ENCODE measurements at regions of chr10 and their contacts with region 1.

Region 1: GRCh38 chr10:119165171-119166110 is at the start of gene SFXN4:
- DNase-seq: peak in 1 of 2 experiments; percentile 65
- H3K4me3 ChIP-seq: peak within 1 kb of the TSS; percentile 84
- H3K27ac ChIP-seq: peak within 1 kb of the TSS; percentile 68
- H3K4me1 ChIP-seq: 0 out of 2 replicates have a peak, but pooled peaks cover 8% of the 10 kb centered on the region
- H3K27me3 ChIP-seq: no peaks in the 10 kb centered on the region
- CTCF ChIP-seq: no peak
- total RNA-seq, gene SFXN4: 15.4 and 18.3 TPM in 2 replicates

Region 2: DNA sequence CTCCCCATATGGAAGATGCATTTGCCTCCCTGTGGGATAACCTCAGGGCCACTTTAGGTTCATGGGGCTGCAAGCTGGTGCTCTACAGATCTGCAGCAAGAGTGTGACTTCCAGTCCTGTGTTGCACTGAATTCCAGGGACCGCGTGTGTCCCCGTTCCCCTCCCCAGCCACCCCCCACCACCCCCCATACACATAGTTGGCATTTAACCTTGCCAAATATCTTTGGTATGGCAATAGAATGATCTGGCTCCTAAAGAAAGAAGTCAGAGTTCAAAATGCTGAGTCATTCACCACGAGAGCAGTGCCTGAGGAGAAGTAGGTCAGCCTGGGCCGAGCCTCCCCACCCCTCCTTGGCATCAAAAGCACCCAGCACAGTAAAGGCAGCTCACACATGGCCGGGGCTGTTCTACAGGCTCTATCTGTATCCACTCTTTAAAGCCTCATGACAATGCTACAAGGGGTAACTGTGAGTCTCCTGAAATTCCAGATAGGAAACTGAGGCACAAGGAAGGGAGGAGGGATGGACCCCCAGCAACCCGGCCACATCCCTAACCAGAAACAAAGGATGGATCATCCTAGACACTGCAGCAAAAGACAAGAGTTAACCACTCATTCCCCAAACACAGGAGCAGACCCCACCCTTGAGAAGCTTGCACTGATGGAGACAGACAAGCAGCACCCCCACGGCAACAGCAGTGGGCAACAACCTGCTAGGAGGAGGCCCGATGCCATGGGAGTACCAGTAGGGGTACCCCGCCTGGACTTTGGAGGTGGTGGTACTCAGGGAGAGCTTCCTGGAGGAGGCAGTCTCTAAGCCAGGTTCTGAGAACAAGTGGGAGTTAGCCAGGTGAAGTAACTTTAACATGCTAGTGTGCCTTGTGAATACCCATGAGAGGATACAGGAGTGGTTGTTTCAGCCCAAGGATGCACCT is 206.2 kb before region 1 on chr10:
- CTCF ChIA-PET with region 1: no interaction called
- POLR2A ChIA-PET with region 1: interaction called, 30 read pairs
- intact Hi-C with region 1: no loop called
- DNase-seq: peak; percentile 65 to 87
- H3K4me3 ChIP-seq: peak overlapping the region; percentile 24; the same call in 1 of the 2 replicates
- H3K27ac ChIP-seq: peak overlapping the region; percentile 92
- H3K4me1 ChIP-seq: peaks cover 49% of the 10 kb centered on the region
- H3K27me3 ChIP-seq: no peaks in the 10 kb centered on the region
- CTCF ChIP-seq: no peak

Region 3: DNA sequence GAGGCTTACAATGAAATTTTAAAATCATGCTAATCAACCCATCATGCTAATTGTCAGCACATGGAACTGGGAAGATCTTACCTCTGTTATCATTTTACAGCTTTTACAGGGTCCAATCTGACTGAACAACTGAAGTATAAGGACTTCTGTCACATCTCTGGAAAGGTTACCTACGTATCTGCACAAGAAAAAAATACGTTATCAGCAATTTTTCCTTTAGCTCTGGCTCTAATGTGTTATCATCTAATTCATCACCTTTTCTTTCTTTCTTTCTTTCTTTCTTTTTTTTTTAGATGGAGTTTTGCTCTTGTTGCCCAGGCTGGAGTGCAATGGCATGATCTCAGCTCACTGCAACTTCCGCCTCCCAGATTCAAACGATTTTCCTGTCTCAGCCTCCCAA is 422.6 kb after region 1 on chr10:
- CTCF ChIA-PET with region 1: no interaction called
- POLR2A ChIA-PET with region 1: interaction called, 22 read pairs
- intact Hi-C with region 1: no loop called
- DNase-seq: no peak
- H3K4me3 ChIP-seq: no peak overlapping the region
- H3K27ac ChIP-seq: no peak overlapping the region
- H3K4me1 ChIP-seq: peaks cover 14% of the 10 kb centered on the region
- H3K27me3 ChIP-seq: no peaks in the 10 kb centered on the region
- CTCF ChIP-seq: no peak

Measured in PC-9 (cell line).